Spleen (tissue), 13 donors: ENCODE measurements at regions of chr2 and their contacts with region 1.

Region 1: DNA sequence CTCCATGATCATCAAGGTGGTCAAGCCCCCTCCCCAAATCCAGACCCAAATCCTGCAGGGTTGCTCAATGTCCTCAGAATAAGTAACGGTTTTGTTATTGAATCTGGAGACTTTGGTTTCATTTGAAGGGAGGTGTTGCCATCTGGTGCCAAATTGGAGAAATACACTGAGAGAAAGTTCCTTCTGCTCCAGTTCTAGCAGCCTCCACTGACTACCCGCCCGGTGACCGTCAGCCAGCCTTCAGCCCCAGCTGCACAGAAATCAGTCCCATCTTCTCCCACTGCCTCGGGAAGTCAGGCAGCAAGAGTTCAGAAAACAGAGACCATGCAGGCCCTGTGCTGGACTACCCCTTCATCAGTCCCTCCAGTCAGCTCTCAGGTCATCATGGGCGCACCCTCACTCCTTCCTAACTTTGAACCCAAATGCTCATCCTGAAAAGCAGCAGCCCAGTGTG is 38.7 kb downstream of the PKDCC start:
- DNase-seq: peak; percentile 73
- H3K4me3 ChIP-seq: no peak overlapping the region
- H3K27ac ChIP-seq: no peak overlapping the region
- H3K4me1 ChIP-seq: peaks cover 0 to 10% (median 4%) of the 10 kb centered on the region in 6 donors
- H3K27me3 ChIP-seq: no peaks in the 10 kb centered on the region
- CTCF ChIP-seq: peak; percentile 55 to 84 (median 69)
- POLR2A ChIP-seq: no peak

Region 2: GRCh38 chr2:41853427-41854216 is 232.9 kb before region 1 on chr2:
- intact Hi-C with region 1: loop called (anchors 5 kb)
- DNase-seq: no peak
- H3K4me3 ChIP-seq: no peak overlapping the region
- H3K27ac ChIP-seq: no peak overlapping the region
- H3K4me1 ChIP-seq: peaks cover 0 to 6% (median 0%) of the 10 kb centered on the region in 6 donors
- H3K27me3 ChIP-seq: peaks cover 0 to 35% (median 0%) of the 10 kb centered on the region in 7 donors
- CTCF ChIP-seq: peak; percentile 20 to 72 (median 63)
- POLR2A ChIP-seq: no peak

Region 3: DNA sequence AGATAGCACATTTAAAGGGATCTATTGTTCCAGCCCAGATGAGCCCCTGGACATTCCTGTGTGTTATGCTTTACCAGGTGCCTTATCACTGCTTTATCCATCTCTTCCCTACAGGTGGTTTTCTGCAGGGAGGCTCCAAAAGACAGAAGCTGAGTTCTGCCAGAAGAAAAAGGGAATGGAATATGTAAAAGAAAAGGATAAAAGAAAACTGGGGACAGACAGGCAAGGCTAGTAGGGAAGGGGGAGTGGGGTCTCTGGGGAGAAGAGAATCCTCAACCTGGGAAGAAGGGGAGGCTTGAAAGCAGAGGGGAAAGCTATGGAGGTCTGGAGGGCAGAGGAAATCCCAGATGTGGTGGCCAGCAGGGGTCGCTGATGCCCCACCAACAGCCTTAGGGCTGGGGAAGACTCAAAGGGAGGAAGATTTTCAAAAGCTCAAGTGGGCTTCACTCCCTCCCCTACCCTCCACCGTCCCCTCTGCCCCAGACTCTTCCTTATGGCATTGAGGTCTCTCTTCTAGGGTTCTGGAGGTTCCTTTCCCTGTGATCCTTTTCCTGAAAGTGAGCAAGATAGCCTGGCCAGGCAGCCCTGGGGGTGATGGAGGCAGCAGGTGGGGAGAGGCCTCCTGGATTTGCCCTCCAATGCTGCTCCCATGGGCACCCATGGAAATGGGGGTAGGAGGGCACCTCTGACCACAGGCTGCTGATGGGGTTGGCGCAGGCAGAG is 216.8 kb before region 1 on chr2:
- intact Hi-C with region 1: loop called (anchors 5 kb)
- DNase-seq: peak; percentile 88
- H3K4me3 ChIP-seq: no peak overlapping the region
- H3K27ac ChIP-seq: no peak overlapping the region
- H3K4me1 ChIP-seq: peaks cover 0 to 24% (median 0%) of the 10 kb centered on the region in 6 donors
- H3K27me3 ChIP-seq: peaks cover 0 to 7% (median 0%) of the 10 kb centered on the region in 7 donors
- CTCF ChIP-seq: peak; percentile 25 to 88 (median 80)
- POLR2A ChIP-seq: no peak

Region 4: DNA sequence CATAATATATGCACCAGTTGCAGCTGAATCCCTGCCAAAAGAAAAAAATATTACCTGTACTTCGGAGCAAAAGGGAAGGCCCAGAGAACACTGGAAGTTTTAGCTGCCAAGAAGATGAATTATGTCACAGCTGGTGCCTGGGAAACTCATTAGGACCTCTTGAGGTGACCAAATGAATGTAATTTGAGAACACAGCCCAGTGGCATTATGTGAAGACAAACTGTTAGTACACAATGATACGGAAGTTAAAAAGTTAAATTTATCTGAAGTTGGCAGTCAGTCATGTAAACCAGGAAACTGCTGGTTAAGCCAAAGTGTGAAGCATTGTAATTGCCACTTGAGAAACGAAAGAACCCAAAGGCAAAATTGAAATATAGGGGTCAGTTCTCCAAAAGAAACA is 163.4 kb after region 1 on chr2:
- intact Hi-C with region 1: no loop called
- DNase-seq: no peak
- H3K4me3 ChIP-seq: no peak overlapping the region
- H3K27ac ChIP-seq: peak overlapping the region in 3 of 8 donors; percentile 19 to 24 (median 22)
- H3K4me1 ChIP-seq: peaks cover 16 to 80% (median 29%) of the 10 kb centered on the region in 6 donors
- H3K27me3 ChIP-seq: no peaks in the 10 kb centered on the region
- CTCF ChIP-seq: no peak
- POLR2A ChIP-seq: no peak

Region 5: DNA sequence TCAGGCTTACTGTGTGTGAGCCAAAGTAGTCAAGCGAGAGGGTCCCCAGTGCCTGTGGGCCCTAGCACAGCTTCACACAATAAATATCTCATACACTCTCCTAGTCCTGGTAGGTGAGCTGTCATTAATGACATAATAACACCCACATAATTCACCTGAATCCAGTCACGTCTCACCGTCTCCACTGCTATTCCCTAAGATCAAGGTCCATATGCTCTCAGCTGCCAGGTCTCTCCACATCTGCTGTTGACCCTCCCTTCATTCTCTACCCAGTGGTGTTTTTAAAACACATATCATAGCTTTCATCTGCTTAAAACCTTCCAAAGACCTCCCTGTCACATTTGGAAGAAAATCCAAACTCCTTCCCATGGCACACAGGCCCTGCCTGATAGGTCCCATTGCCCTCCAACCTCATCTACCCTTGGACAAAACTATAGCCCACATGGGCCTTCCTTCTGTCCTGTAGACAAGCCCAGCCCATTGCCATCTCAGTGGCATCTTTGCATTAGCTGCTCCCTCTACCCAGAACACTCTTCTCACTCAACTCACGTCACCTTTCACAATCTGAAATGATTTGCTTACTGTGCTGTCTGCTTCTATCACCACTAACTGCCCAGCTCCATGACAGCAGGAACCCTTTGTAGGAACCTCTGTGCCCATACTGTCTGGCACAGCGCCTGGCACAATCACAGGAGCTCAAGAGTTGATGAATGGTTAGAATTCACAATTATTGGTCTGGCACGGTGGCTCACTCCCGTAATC is 399.8 kb after region 1 on chr2:
- intact Hi-C with region 1: no loop called
- DNase-seq: no peak
- H3K4me3 ChIP-seq: no peak overlapping the region
- H3K27ac ChIP-seq: no peak overlapping the region
- H3K4me1 ChIP-seq: no peaks in the 10 kb centered on the region
- H3K27me3 ChIP-seq: peaks cover 0 to 23% (median 0%) of the 10 kb centered on the region in 7 donors
- CTCF ChIP-seq: no peak
- POLR2A ChIP-seq: no peak